Activated T-helper 2 cell treated with anti-CD3 and anti-CD28 coated beads, Interferon-gamma antibody, Interleukin-2, Interleukin-4, amounts not matched to agents 10 μg/mL and 5 μg/mL and 100 μg/mL, durations not matched to agents 14 hours and 24 hours and 36 hours (primary cell): ENCODE measurements at regions of chr17 and their contacts with region 1.

Region 1: DNA sequence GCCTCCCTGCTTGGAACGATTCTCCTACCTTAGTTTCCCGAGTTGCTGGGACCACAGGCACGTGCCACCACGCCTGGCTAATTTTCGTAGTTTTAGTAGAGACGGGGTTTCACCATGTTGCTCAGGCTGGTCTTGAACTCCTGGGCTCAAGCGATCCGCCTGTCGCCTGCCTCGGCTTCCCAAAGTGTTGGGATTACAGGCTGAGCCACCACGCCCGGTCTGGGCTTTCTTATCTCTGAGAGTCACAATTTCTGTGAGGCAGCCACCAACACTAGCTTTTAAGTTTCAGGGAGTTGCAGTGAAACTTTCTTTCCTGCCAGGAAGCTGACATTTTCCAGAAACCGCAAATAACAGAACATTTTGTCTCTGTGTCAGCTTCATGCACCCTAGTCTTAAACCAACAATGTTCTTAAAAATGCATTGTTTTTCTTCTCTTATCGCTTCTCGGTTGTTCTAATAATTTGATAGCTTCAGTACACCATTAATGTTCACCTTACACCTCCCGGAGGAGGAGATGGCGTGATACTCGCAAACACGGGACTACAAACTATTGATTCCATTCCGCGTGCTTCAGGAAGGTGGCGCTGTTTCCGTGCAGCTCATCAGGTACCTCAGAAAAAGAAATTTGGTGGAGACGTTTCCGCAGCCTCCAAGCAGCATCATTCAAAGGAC is 7.4 kb upstream of the DHRS7B start:
- DNase-seq: peak; percentile 61
- H3K4me3 Mint-ChIP-seq: no peak overlapping the region
- H3K27ac Mint-ChIP-seq: no peak overlapping the region
- H3K4me1 Mint-ChIP-seq: peaks cover 10% of the 10 kb centered on the region
- H3K27me3 Mint-ChIP-seq: peaks cover 12% of the 10 kb centered on the region

Region 2: DNA sequence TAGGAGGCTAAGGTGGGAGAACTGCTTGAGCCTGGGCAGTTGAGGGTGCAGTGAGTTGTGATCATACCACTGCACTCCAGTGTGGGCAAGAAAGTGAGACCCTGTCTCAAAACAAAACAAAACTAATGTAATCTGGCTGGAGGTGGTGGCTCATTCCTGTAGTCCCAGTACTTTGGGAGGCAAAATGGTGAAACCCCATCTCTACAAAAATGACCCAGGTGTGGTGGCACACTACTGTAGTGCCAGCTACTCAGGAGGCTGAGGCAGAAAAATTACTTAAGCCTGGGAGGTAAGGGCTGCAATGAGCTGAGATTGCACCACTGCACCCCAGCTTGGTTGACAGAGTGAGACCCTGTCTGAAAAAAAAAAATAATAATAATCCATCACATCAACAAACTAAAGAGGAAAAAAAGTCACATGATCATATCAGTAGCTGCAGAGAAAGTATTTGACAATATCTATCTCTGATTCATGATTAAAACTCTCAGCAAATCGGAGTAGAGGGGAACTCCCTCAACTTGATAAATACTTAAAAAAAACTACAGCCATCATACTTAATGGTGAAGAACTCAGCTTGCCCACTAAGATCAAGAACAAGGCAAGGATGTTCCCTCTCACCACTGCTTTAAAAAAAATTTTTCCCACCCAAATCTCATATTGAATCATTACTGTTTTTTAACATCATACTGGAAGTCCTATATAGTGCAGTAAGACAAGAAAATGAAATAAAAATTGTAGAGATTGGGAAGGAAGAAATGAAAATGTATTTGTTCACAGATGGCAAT is 38.4 kb after region 1 on chr17:
- intact Hi-C with region 1: no loop called
- DNase-seq: no peak
- H3K4me3 Mint-ChIP-seq: no peak overlapping the region
- H3K27ac Mint-ChIP-seq: no peak overlapping the region
- H3K4me1 Mint-ChIP-seq: peaks cover 4% of the 10 kb centered on the region
- H3K27me3 Mint-ChIP-seq: no peaks in the 10 kb centered on the region

Region 3: DNA sequence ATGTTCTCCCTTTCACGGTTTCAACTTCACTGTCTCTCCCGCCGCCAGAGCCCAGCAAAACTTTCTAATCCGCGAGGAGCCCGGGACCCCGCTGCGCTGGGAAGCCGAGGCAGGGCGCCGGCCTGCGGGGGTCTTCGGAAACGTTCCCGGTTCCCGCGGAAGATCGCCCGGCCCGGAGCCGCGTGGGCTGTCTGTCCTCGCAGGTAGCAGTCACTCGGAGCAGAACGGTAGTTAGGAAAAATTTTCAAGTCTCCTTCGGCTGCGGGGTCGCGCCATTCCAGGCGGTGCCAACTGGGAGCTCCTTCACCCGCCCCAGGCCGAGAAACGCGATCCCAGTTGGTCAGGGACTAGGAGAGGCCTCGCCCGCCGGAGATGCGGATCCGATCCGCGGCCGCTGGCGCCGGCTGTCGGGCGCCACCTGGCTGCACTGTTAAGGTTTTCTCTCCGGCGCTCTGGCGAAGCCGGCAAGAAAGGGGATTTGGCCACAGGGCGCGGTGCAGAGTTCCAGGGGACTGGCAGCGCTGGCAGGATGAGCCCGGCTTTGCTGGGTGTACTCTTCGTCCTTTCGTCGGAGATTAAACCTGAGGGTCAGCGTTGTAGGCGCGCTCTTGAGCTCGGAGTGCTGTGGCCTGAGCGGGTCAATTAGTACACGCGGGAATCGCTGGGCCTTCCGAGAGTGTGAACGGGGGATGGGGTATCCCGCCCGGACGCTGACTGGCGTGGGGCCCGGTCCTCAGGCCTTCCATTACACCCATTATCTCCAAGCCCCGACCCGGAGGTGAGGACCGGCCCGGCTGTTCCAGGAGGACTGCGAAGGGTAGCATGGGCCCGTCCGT is 392.2 kb after region 1 on chr17:
- intact Hi-C with region 1: loop called (anchors 2 kb)
- DNase-seq: peak; percentile 43
- H3K4me3 Mint-ChIP-seq: peak overlapping the region; percentile 54
- H3K27ac Mint-ChIP-seq: no peak overlapping the region
- H3K4me1 Mint-ChIP-seq: peaks cover 14% of the 10 kb centered on the region
- H3K27me3 Mint-ChIP-seq: peaks cover 57% of the 10 kb centered on the region